GM23248 (cell line): ENCODE measurements at regions of chr3 and their contacts with region 1.

Region 1: GRCh38 chr3:59857589-59858346 is 807.9 kb upstream of the CFAP20DC start:
- DNase-seq: peak; percentile 89
- H3K4me3 ChIP-seq: 0 out of 2 replicates have a peak overlapping the region, but pooled peaks have one; percentile 19
- H3K27ac ChIP-seq: no peak overlapping the region
- H3K4me1 ChIP-seq: no peaks in the 10 kb centered on the region
- H3K27me3 ChIP-seq: no peaks in the 10 kb centered on the region

Region 2: DNA sequence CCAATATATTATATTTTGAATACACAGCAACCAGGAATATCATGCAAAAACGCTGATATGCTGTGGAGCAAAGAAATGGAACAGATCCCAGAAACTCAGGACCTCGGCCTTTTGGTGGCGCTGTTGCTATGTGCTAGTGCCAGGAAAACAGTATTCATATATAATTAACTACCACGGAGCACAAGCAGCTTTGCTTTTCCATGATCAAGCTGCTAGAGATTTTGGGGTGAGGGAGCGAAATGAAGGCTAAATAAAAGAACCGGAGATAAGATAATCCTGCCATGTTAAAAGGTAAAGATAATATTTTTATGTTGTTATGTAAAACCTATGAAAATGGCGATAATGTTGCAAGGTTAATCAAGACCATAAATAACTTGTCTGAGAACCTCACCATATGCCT is 1033.5 kb before region 1 on chr3:
- in situ Hi-C with region 1: loop called (anchors 25 kb)
- DNase-seq: peak; percentile 80
- H3K4me3 ChIP-seq: no peak overlapping the region
- H3K27ac ChIP-seq: no peak overlapping the region
- H3K4me1 ChIP-seq: peaks cover 4% of the 10 kb centered on the region; the same call in 1 of the 2 replicates
- H3K27me3 ChIP-seq: no peaks in the 10 kb centered on the region

Region 3: DNA sequence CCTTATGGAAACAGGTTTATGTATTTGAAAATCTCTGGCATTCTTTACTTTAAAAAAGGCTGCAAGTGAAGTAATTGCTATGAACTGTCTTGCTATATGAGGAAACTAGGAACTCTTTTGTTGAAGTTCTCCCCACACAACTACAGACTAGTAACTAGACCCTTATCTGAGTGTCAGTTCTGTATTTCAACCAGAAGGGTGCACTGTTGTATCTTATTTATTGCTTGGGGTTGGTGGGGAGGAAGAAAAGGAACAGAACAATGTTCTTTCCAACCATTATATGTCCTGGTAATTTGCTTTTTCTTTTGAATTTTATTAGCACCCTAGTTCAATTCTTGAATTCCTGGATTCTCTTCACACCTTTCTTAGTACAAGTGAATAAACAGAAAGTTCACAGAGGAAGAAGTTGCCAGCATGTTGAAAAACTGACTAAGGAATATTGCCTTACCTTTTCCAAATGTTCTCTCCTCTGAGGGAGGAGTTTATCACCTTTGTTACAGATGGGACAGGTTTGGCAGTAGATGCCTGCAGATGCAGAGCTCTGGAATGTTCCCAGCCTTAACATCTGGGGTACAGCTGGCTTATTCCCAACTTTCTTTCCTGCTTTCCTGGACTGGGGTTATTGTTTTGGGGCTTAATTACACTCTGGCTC is 645.5 kb before region 1 on chr3:
- in situ Hi-C with region 1: loop called (anchors 25 kb)
- DNase-seq: peak; percentile 72
- H3K4me3 ChIP-seq: no peak overlapping the region
- H3K27ac ChIP-seq: no peak overlapping the region
- H3K4me1 ChIP-seq: peaks cover 4% of the 10 kb centered on the region
- H3K27me3 ChIP-seq: no peaks in the 10 kb centered on the region

Region 4: GRCh38 chr3:59575113-59576001 is 282.4 kb before region 1 on chr3:
- in situ Hi-C with region 1: loop called (anchors 25 kb)
- DNase-seq: peak; percentile 76
- H3K4me3 ChIP-seq: no peak overlapping the region
- H3K27ac ChIP-seq: no peak overlapping the region
- H3K4me1 ChIP-seq: peaks cover 20% of the 10 kb centered on the region
- H3K27me3 ChIP-seq: no peaks in the 10 kb centered on the region

Region 5: GRCh38 chr3:60154011-60154410 is 296.2 kb after region 1 on chr3:
- in situ Hi-C with region 1: no loop called
- DNase-seq: no peak
- H3K4me3 ChIP-seq: no peak overlapping the region
- H3K27ac ChIP-seq: no peak overlapping the region
- H3K4me1 ChIP-seq: no peaks in the 10 kb centered on the region
- H3K27me3 ChIP-seq: no peaks in the 10 kb centered on the region